ENCODE measurements at regions of chr16 and their contacts with region 1.

Region 1: DNA sequence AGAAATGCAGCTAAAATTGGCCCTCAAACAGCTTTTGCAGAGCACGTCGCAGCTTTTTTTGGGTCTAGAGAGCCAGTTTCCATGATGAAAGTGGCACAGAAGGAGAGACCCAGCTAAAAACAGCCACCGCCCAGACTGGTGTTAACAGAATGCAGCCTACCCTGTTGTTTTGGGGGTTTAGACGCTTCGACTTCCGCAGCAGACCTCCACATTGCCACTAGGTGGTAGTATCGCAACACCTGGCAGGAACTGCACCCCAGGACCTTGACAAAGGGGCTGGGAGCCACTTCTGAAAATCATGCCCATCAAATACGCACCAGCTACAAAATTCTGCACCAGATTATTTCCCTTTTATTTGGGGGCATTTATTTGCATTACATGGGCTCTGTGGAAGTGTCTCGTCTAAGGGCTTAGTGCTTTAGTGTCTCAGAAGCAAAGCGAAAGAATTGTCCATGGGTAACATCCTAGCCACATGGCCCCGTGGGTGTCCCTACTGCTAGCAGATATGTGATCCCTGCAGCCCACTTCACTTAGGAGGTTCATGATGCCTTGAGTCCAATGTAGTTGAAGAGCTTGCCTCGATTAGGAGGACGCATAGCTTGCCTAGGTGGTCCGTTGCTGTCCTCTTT is 167.1 kb downstream of the HAPSTR1 start:
- DNase-seq: peak; percentile 44
- ATAC-seq: peak; percentile 78
- H3K4me3 ChIP-seq: no peak overlapping the region
- H3K27ac ChIP-seq: no peak overlapping the region
- H3K4me1 ChIP-seq: peaks cover 14% of the 10 kb centered on the region
- H3K27me3 ChIP-seq: no peaks in the 10 kb centered on the region
- CTCF ChIP-seq: peak; percentile 94
- EP300 ChIP-seq: no peak
- POLR2A ChIP-seq: no peak
- RAD21 ChIP-seq: peak; percentile 85

Region 2: DNA sequence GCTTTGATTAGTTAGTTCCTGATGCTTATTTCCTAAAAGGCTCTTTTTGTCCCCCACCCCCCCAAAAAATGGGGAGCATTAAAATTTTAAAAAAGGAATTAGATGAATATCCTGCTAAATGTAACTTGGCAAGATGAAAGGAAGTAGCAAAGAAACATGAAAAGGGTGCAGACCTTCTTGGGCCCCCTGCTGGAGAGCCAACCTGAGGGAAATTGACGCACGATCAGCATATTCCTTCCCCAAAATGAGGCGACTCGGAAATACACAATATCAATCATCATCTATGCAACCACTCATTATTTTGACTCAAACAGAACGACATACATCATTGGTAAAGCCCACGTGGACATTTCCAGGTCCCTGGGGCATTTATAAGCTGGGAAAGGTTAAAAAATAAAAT is 864.0 kb after region 1 on chr16:
- CTCF ChIA-PET with region 1: interaction called, 3 read pairs
- POLR2A ChIA-PET with region 1: no interaction called
- in situ Hi-C with region 1: no loop called
- intact Hi-C with region 1: loop called (anchors 1 kb)
- DNase-seq: peak; percentile 15
- ATAC-seq: peak; percentile 46; the same call in 2 of the 3 replicates
- H3K4me3 ChIP-seq: no peak overlapping the region
- H3K27ac ChIP-seq: no peak overlapping the region
- H3K4me1 ChIP-seq: no peaks in the 10 kb centered on the region
- H3K27me3 ChIP-seq: peaks cover 0 to 35% of the 10 kb centered on the region in 2 experiments; a peak in 3 of 5 replicates
- CTCF ChIP-seq: 0 out of 2 replicates have a peak, but pooled peaks have one; percentile 22
- EP300 ChIP-seq: no peak
- POLR2A ChIP-seq: no peak
- RAD21 ChIP-seq: no peak